ENCODE measurements at regions of chr15 and their contacts with region 1.

Region 1: GRCh38 chr15:52227456-52227855 is 36.3 kb upstream of the GNB5 start:
- DNase-seq: peak; percentile 90
- ATAC-seq: peak; percentile 71
- H3K4me3 ChIP-seq: no peak overlapping the region
- H3K4me3 Mint-ChIP-seq: peak overlapping the region; percentile 30
- H3K27ac ChIP-seq: peak overlapping the region; percentile 62 to 97
- H3K27ac Mint-ChIP-seq: peak overlapping the region; percentile 96
- H3K4me1 ChIP-seq: peaks cover 57 to 88% of the 10 kb centered on the region in 2 donors
- H3K4me1 Mint-ChIP-seq: peaks cover 70% of the 10 kb centered on the region
- H3K27me3 ChIP-seq: no peaks in the 10 kb centered on the region
- H3K27me3 Mint-ChIP-seq: no peaks in the 10 kb centered on the region
- CTCF ChIP-seq: peak; percentile 85

Region 2: DNA sequence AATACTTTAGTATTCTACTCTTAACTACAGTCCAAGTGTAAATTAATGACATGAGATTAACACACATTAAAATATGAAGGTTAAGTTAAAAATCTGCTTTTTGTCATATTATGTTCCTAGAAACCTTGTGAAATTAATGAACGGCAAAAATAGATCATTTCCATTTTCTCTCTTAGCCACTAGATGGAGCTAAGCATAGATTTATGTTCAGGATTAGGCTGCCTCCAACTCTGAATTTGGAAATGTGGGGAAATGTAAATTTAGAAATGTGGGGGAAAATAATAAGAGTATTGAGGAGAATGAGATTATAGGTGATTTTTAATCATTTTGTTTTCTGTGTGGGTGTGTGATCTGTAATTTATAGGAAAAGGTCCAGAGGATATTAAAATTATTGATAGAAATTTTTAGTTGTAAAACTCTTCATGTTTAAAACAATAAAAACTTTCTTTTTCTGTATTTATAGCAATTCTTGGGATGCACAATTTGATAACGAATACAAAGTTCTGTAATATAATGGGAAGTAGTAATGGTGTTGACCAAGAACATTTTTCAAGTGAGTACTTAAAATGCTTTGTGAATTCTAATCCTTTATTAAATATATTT is 338.8 kb before region 1 on chr15:
- CTCF ChIA-PET with region 1: interaction called, 5 read pairs
- POLR2A ChIA-PET with region 1: no interaction called
- intact Hi-C with region 1: loop called (anchors 1 kb)
- DNase-seq: peak; percentile 35
- ATAC-seq: no peak
- H3K4me3 ChIP-seq: no peak overlapping the region
- H3K4me3 Mint-ChIP-seq: no peak overlapping the region
- H3K27ac ChIP-seq: no peak overlapping the region
- H3K27ac Mint-ChIP-seq: no peak overlapping the region
- H3K4me1 ChIP-seq: no peaks in the 10 kb centered on the region
- H3K4me1 Mint-ChIP-seq: peaks cover 5% of the 10 kb centered on the region
- H3K27me3 ChIP-seq: no peaks in the 10 kb centered on the region
- H3K27me3 Mint-ChIP-seq: no peaks in the 10 kb centered on the region
- CTCF ChIP-seq: peak; percentile 92

Region 3: DNA sequence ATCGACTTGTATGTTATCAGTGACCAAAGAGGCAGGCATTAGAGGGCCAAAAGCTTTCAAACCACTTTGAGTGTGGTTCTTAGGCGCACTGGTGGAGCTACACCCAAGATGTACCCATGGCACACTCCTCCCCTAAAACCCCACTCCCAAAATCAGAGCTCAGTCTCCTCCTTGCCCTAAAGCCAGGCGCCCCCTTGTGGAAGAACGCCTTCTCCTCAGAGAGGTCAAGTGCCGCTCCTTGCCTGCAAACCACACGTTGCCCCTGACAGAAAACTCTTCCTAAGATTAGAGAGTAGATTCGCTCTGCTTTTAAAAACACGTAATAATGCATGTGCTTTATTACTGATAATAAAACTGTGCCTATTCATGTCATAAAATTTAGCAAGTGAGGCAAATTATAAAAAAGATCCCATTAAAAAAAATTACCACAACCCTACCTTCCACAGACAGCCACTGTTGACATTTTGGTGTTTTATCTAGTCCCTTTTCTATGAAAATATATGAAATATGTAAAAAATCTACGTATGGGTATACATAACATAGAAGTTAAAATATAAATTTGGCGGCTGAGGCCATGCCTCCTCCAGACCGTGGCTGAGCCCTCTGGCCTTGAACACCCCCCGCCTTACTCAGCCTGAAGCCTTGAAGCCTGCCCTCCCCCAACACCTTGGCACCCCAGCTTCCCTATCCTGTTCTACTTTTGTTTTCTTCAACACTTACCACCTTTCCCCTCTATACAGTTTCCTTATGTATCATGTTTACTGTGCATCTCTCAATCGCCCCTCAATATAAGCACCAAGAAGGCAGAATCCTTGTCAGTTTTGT is 148.4 kb before region 1 on chr15:
- CTCF ChIA-PET with region 1: interaction called, 15 read pairs
- POLR2A ChIA-PET with region 1: no interaction called
- intact Hi-C with region 1: no loop called
- DNase-seq: peak; percentile 81
- ATAC-seq: peak; percentile 64
- H3K4me3 ChIP-seq: no peak overlapping the region
- H3K4me3 Mint-ChIP-seq: no peak overlapping the region
- H3K27ac ChIP-seq: no peak overlapping the region
- H3K27ac Mint-ChIP-seq: no peak overlapping the region
- H3K4me1 ChIP-seq: peaks cover 11 to 14% of the 10 kb centered on the region in 2 donors
- H3K4me1 Mint-ChIP-seq: peaks cover 25% of the 10 kb centered on the region
- H3K27me3 ChIP-seq: peaks cover 0 to 9% (median 0%) of the 10 kb centered on the region in 4 experiments
- H3K27me3 Mint-ChIP-seq: peaks cover 6% of the 10 kb centered on the region
- CTCF ChIP-seq: peak; percentile 93

Region 4: GRCh38 chr15:52117549-52117948 is 109.9 kb before region 1 on chr15:
- CTCF ChIA-PET with region 1: no interaction called
- POLR2A ChIA-PET with region 1: no interaction called
- intact Hi-C with region 1: no loop called
- DNase-seq: no peak
- ATAC-seq: no peak
- H3K4me3 ChIP-seq: no peak overlapping the region
- H3K4me3 Mint-ChIP-seq: no peak overlapping the region
- H3K27ac ChIP-seq: no peak overlapping the region
- H3K27ac Mint-ChIP-seq: no peak overlapping the region
- H3K4me1 ChIP-seq: no peaks in the 10 kb centered on the region
- H3K4me1 Mint-ChIP-seq: no peaks in the 10 kb centered on the region
- H3K27me3 ChIP-seq: no peaks in the 10 kb centered on the region
- H3K27me3 Mint-ChIP-seq: no peaks in the 10 kb centered on the region
- CTCF ChIP-seq: no peak

Region 5: GRCh38 chr15:52179278-52180195 is 47.9 kb before region 1 on chr15:
- CTCF ChIA-PET with region 1: interaction called, 36 read pairs
- POLR2A ChIA-PET with region 1: interaction called, 60 read pairs
- intact Hi-C with region 1: loop called (anchors 1 kb)
- DNase-seq: peak; percentile 95
- ATAC-seq: peak; percentile 78
- H3K4me3 ChIP-seq: peak overlapping the region; percentile 67 to 97 (median 87)
- H3K4me3 Mint-ChIP-seq: peak overlapping the region; percentile 93
- H3K27ac ChIP-seq: peak overlapping the region; percentile 97
- H3K27ac Mint-ChIP-seq: peak overlapping the region; percentile 99
- H3K4me1 ChIP-seq: peaks cover 33 to 48% of the 10 kb centered on the region in 2 donors
- H3K4me1 Mint-ChIP-seq: peaks cover 59% of the 10 kb centered on the region
- H3K27me3 ChIP-seq: no peaks in the 10 kb centered on the region
- H3K27me3 Mint-ChIP-seq: no peaks in the 10 kb centered on the region
- CTCF ChIP-seq: no peak

Region 6: GRCh38 chr15:52256366-52256765 is 28.9 kb after region 1 on chr15:
- CTCF ChIA-PET with region 1: interaction called, 512 read pairs
- POLR2A ChIA-PET with region 1: interaction called, 61 read pairs
- intact Hi-C with region 1: loop called (anchors 1 kb)
- DNase-seq: peak; percentile 89
- ATAC-seq: peak; percentile 87
- H3K4me3 ChIP-seq: no peak overlapping the region
- H3K4me3 Mint-ChIP-seq: peak overlapping the region; percentile 50
- H3K27ac ChIP-seq: no peak overlapping the region
- H3K27ac Mint-ChIP-seq: peak overlapping the region; percentile 85
- H3K4me1 ChIP-seq: peaks cover 18 to 33% of the 10 kb centered on the region in 2 donors
- H3K4me1 Mint-ChIP-seq: peaks cover 43% of the 10 kb centered on the region
- H3K27me3 ChIP-seq: no peaks in the 10 kb centered on the region
- H3K27me3 Mint-ChIP-seq: no peaks in the 10 kb centered on the region
- CTCF ChIP-seq: peak; percentile 79

Region 7: DNA sequence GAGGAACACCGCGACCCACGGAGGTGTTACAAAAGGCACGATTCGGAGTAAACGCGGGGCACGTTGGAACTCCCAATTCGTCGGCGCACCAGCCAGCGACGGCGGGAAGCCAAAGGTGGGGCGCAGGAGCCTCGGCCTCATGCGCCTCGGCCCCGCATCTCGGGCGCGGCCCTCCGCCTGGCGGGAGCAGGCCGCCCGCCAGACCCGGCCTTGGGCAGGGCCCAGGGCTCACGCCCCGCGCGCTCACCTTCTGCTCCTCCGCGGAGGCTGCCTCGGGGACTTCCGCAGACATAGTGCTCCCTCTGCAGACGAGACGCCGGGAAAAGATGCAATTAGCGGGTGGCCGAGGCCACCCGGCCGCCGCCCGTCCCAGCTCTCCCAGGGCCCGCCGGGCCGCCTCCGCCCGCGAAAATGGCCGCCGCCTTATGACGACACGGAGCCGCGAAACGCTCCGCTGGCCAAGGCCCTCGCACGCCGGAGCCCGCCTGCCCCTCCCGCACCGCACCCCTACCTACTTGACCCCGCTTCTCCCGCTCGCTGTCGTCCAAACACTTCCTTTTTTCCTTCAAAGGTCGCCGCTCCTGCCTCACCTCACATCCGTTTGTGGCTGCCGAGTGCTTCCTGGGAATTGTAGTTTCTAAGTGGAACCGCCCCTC is 341.3 kb after region 1 on chr15 and contains the start of gene ARPP19:
- CTCF ChIA-PET with region 1: no interaction called
- POLR2A ChIA-PET with region 1: no interaction called
- intact Hi-C with region 1: loop called (anchors 2 kb)
- DNase-seq: peak; percentile 93
- ATAC-seq: peak; percentile 84
- H3K4me3 ChIP-seq: peak within 1 kb of the TSS; percentile 61 to 83 (median 75)
- H3K4me3 Mint-ChIP-seq: peak within 1 kb of the TSS; percentile 98
- H3K27ac ChIP-seq: peak within 1 kb of the TSS; percentile 93 to 99
- H3K27ac Mint-ChIP-seq: peak within 1 kb of the TSS; percentile 98
- H3K4me1 ChIP-seq: peaks cover 33 to 35% of the 10 kb centered on the region in 2 donors
- H3K4me1 Mint-ChIP-seq: peaks cover 42% of the 10 kb centered on the region
- H3K27me3 ChIP-seq: no peaks in the 10 kb centered on the region
- H3K27me3 Mint-ChIP-seq: no peaks in the 10 kb centered on the region
- CTCF ChIP-seq: no peak
- total RNA-seq, gene ARPP19: 147 and 152 TPM in 2 replicates